ENCODE measurements at regions of chr10 and their contacts with region 1.

Region 1: GRCh38 chr10:34666008-34666705 is 148.9 kb downstream of the PARD3 start:
- DNase-seq: peak; percentile 100
- ATAC-seq: peak; percentile 89
- H3K4me3 ChIP-seq: peak overlapping the region; percentile 19; the same call in 1 of the 2 replicates
- H3K27ac ChIP-seq: peak overlapping the region; percentile 62
- H3K4me1 ChIP-seq: peaks cover 22% of the 10 kb centered on the region
- H3K27me3 ChIP-seq: no peaks in the 10 kb centered on the region
- CTCF ChIP-seq: peak; percentile 100

Region 2: GRCh38 chr10:34696423-34696822 is 30.3 kb after region 1 on chr10:
- CTCF ChIA-PET with region 1: no interaction called
- POLR2A ChIA-PET with region 1: no interaction called
- intact Hi-C with region 1: loop called (anchors 1 kb)
- DNase-seq: peak; percentile 99
- ATAC-seq: peak; percentile 74
- H3K4me3 ChIP-seq: no peak overlapping the region
- H3K27ac ChIP-seq: peak overlapping the region; percentile 0; the same call in 1 of the 2 replicates
- H3K4me1 ChIP-seq: peaks cover 57% of the 10 kb centered on the region
- H3K27me3 ChIP-seq: no peaks in the 10 kb centered on the region
- CTCF ChIP-seq: no peak

Region 3: DNA sequence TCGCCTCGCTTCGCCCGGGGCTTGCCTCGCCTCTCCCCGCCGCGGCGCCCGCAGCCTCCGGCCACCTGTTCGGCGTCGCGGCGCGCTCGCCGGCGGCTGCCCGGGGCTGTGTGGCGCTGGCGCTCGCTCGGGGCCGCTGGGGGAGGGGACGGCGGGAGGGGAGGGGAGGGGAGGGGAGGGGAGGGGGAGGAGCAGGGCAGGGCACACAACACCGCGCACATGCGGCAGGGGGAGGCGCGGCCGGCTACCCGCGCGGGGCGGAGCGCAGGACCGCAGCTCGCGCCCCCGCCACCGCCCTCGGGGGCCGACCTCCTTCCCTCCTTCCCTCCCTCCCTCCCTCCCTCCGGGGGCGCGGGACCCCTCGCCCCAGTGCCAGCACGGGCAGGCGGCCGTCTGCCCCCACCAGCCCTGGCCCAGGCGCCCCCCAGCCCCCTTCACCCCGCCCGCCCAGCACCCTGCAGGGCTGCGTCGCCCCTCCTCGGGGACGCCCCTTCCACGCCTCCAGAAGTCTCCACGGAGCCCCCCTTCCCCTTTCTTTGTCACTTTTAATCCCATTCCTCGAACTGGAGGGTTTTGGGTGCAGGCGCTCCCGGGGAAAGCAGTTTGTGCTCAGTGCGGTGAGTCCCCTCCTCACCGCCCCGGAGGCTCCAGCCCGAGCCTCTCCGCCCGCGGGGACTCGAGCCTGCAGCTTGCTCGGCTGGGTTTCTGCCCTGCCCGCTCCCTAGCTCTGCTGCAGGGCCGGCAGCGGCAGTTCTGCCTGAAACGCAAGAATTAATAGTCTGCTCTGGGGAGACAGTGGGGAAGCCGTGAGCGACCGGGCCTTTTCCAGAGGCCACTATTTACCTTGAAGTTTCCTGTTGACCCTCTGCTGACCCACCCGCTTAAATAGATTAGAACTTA is 149.3 kb after region 1 on chr10 and contains the start of gene PARD3:
- CTCF ChIA-PET with region 1: interaction called, 15 read pairs
- POLR2A ChIA-PET with region 1: no interaction called
- intact Hi-C with region 1: loop called (anchors 1 kb)
- DNase-seq: peak; percentile 91
- ATAC-seq: peak; percentile 64
- H3K4me3 ChIP-seq: peak within 1 kb of the TSS; percentile 72
- H3K27ac ChIP-seq: peak within 1 kb of the TSS; percentile 13; the same call in 1 of the 2 replicates
- H3K4me1 ChIP-seq: peaks cover 36% of the 10 kb centered on the region
- H3K27me3 ChIP-seq: no peaks in the 10 kb centered on the region
- CTCF ChIP-seq: no peak
- total RNA-seq, gene PARD3: 149 and 154 TPM in 2 replicates

Region 4: GRCh38 chr10:34861293-34862021 is 195.3 kb after region 1 on chr10:
- CTCF ChIA-PET with region 1: no interaction called
- POLR2A ChIA-PET with region 1: no interaction called
- intact Hi-C with region 1: loop called (anchors 1 kb)
- DNase-seq: peak; percentile 98
- ATAC-seq: peak; percentile 98
- H3K4me3 ChIP-seq: no peak overlapping the region; the same call in 1 of the 2 replicates
- H3K27ac ChIP-seq: peak overlapping the region; percentile 3; the same call in 1 of the 2 replicates
- H3K4me1 ChIP-seq: peaks cover 27% of the 10 kb centered on the region
- H3K27me3 ChIP-seq: no peaks in the 10 kb centered on the region
- CTCF ChIP-seq: no peak

Region 5: DNA sequence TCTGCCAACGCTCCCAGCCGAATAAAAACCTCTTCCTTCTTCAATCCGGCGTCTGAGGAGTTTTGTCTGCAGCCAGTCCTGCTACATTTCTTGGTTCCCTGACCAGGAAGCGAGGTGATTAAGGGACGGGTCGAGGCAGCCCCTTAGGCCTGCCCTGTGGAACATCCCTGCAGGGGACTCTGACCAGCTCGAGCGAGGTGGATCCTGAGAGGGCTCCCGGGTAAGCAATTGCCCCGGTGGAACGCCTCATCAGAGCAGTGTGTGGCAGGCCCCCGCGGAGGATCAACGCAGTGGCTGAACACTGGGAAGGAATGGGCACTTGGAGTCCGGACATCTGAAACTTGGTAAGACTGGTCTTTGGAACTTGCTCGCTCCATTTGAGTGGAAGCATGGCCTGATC is 303.0 kb after region 1 on chr10:
- CTCF ChIA-PET with region 1: interaction called, 5 read pairs
- POLR2A ChIA-PET with region 1: no interaction called
- intact Hi-C with region 1: loop called (anchors 1 kb)
- DNase-seq: no peak
- ATAC-seq: no peak
- H3K4me3 ChIP-seq: no peak overlapping the region
- H3K27ac ChIP-seq: no peak overlapping the region
- H3K4me1 ChIP-seq: peaks cover 23% of the 10 kb centered on the region
- H3K27me3 ChIP-seq: no peaks in the 10 kb centered on the region
- CTCF ChIP-seq: no peak

Region 6: DNA sequence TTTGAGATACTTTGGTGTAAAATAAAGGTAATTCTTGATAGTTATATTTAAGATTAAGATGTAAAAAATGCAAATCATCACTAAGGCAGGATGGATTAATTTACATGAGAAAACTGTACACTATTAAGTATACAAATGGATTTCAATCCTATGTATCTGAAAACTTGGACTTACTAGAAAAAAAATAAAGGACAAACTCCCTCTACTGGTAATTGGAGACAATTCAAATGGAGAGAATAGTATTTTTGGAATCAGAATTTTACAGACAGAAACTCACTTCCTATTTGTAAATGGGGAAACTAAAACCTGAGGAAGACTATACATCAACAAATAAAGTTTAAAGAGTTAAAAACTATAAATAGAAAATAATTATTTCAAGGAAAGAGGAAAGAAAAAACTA is 361.4 kb after region 1 on chr10:
- CTCF ChIA-PET with region 1: interaction called, 7 read pairs
- POLR2A ChIA-PET with region 1: no interaction called
- intact Hi-C with region 1: loop called (anchors 2 kb)
- DNase-seq: peak; percentile 88
- ATAC-seq: peak; percentile 8; the same call in 1 of the 2 replicates
- H3K4me3 ChIP-seq: no peak overlapping the region
- H3K27ac ChIP-seq: no peak overlapping the region
- H3K4me1 ChIP-seq: peaks cover 16% of the 10 kb centered on the region
- H3K27me3 ChIP-seq: no peaks in the 10 kb centered on the region
- CTCF ChIP-seq: peak; percentile 96

Region 7: GRCh38 chr10:36224431-36224985 is 1558.4 kb after region 1 on chr10:
- CTCF ChIA-PET with region 1: interaction called, 13 read pairs
- POLR2A ChIA-PET with region 1: no interaction called
- intact Hi-C with region 1: no loop called
- DNase-seq: peak; percentile 43
- ATAC-seq: peak; percentile 37; the same call in 1 of the 2 replicates
- H3K4me3 ChIP-seq: no peak overlapping the region
- H3K27ac ChIP-seq: no peak overlapping the region
- H3K4me1 ChIP-seq: no peaks in the 10 kb centered on the region
- H3K27me3 ChIP-seq: no peaks in the 10 kb centered on the region
- CTCF ChIP-seq: no peak

Measured in PC-3 (cell line).